Activated T-helper 1 cell treated with anti-CD3 and anti-CD28 coated beads, Interleukin-12 subunit alpha, Interleukin-12 subunit beta, Interleukin-2, Interleukin-4 antibody, amounts not matched to agents 30 ng/mL and 10 ng/mL and 1 ng/mL, durations not matched to agents 14 hours and 24 hours and 36 hours (primary cell): ENCODE measurements at regions of chr2 and their contacts with region 1.

Region 1: GRCh38 chr2:197705121-197705911 is at the start of gene MARS2:
- DNase-seq: peak; percentile 91
- H3K4me3 Mint-ChIP-seq: peak within 1 kb of the TSS; percentile 94
- H3K27ac Mint-ChIP-seq: peak within 1 kb of the TSS; percentile 85
- H3K4me1 Mint-ChIP-seq: peaks cover 60% of the 10 kb centered on the region
- H3K27me3 Mint-ChIP-seq: peaks cover 3% of the 10 kb centered on the region
- total RNA-seq, gene MARS2: 22.6 and 22.9 TPM in 2 replicates

Region 2: GRCh38 chr2:196565106-196565765 is 1140.1 kb before region 1 on chr2:
- intact Hi-C with region 1: no loop called
- DNase-seq: no peak
- H3K4me3 Mint-ChIP-seq: no peak overlapping the region
- H3K27ac Mint-ChIP-seq: no peak overlapping the region
- H3K4me1 Mint-ChIP-seq: no peaks in the 10 kb centered on the region
- H3K27me3 Mint-ChIP-seq: peaks cover 15% of the 10 kb centered on the region

Region 3: GRCh38 chr2:196783431-196784094 is 921.8 kb before region 1 on chr2:
- intact Hi-C with region 1: loop called (anchors 10 kb)
- DNase-seq: no peak
- H3K4me3 Mint-ChIP-seq: peak overlapping the region; percentile 12
- H3K27ac Mint-ChIP-seq: peak overlapping the region; percentile 80
- H3K4me1 Mint-ChIP-seq: peaks cover 22% of the 10 kb centered on the region
- H3K27me3 Mint-ChIP-seq: no peaks in the 10 kb centered on the region

Region 4: GRCh38 chr2:196900843-196901242 is 804.5 kb before region 1 on chr2:
- intact Hi-C with region 1: no loop called
- DNase-seq: no peak
- H3K4me3 Mint-ChIP-seq: no peak overlapping the region
- H3K27ac Mint-ChIP-seq: no peak overlapping the region
- H3K4me1 Mint-ChIP-seq: peaks cover 28% of the 10 kb centered on the region
- H3K27me3 Mint-ChIP-seq: no peaks in the 10 kb centered on the region

Region 5: DNA sequence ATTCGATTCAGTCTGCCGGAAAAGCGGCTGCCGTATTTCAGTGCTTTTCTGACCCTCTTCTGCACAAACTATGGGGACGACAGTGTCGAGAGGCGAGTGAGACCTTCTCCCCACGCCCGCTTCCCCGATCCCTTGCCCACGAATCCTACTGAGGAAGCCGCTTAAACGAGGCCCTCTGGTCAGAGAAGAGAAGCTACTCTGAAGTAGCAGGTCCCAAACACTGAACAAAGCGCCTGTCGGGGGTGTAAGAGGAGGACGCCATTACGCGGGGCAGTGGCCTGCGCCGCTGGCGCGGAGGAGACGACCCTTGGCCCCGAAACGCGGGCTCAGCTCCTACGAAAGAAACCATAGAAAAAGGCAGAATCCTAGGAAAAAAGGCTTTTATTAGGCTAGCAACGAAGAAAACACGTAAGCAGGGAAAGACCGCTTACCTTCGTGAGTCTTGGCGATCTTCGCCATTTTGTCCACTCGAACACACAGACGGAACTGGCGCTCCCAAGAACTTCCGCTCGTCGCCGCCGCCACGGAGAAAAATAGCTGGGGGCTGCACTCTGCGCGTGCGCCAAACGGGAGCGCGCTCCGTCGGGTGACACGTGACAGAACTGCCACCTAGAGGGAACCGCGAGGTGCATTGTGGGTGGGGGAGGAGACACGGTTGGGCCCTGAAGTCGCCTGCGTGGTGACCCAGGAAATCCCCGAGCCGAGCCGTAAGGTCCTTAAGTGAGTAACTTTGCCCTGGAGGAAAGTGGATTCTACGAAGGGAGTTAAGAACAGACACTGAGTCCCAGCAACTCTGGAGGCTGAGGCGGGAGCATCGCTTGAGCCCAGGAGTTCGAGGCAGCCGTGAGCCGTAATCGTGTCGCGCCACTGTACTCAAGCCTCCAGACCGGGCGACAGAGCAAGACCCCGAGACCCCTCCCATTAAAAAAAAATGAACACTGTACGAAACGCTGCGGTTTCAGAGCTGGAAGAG is 270.5 kb before region 1 on chr2 and contains the start of gene SF3B1:
- intact Hi-C with region 1: loop called (anchors 1 kb)
- DNase-seq: peak; percentile 99
- H3K4me3 Mint-ChIP-seq: peak within 1 kb of the TSS; percentile 95
- H3K27ac Mint-ChIP-seq: peak within 1 kb of the TSS; percentile 99
- H3K4me1 Mint-ChIP-seq: peaks cover 50% of the 10 kb centered on the region
- H3K27me3 Mint-ChIP-seq: no peaks in the 10 kb centered on the region
- total RNA-seq, gene SF3B1: 247 and 268 TPM in 2 replicates

Region 6: DNA sequence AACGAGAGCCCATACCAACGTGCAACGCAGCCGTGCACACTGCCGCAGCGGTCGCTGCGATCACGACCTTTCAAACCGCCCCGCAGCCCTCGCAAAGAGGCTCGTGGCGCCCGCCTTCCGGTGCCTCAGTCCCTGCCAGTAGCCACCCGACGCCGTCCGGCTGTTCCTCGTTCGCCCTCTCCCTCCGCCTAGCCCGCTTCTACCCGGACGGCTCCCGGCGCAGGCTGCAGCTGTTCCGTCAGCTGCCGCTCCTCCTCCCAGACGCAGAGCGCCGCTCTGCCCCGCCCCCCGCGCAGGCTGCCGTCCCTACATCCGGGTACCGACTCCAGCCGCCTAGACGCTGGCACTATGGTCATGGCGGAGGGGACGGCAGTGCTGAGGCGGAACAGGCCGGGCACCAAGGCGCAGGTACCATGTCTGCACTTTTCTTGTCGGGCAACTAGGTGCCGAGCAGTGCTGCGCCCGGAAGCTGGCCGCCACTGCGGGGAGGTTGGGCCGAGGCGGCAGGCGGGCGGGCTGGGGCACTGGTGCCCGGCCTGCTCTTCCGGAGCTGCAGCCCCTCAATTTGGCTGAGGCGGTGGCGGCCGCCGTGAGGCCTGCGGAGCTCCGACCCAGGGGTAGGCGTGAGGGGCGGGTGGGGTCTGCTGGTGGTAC is 189.4 kb before region 1 on chr2 and contains the start of gene MOB4:
- intact Hi-C with region 1: loop called (anchors 1 kb)
- DNase-seq: peak; percentile 95
- H3K4me3 Mint-ChIP-seq: peak within 1 kb of the TSS; percentile 98
- H3K27ac Mint-ChIP-seq: peak within 1 kb of the TSS; percentile 90
- H3K4me1 Mint-ChIP-seq: peaks cover 32% of the 10 kb centered on the region
- H3K27me3 Mint-ChIP-seq: no peaks in the 10 kb centered on the region
- total RNA-seq, gene MOB4: 25.1 and 27.2 TPM in 2 replicates

Region 7: DNA sequence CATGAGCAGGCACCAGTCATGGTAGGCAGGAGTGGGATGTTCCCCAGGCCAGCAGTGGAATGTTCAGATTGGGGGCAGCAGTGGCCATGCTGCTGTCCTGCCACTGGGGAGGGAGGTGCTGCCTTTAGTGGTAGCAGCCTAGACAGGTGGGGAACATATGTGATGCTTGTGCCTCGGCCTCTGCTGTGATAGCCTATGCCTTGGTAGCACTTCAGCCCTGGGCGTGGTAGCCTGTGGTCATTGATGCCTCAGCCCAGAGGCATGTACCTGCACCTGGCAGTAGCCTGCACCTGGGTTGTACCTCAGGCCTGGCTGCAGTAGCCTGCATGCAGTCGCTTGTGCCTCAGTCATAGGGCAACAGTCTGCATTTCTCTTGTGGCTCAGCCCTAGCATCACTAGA is 37.0 kb before region 1 on chr2:
- intact Hi-C with region 1: no loop called
- DNase-seq: no peak
- H3K4me3 Mint-ChIP-seq: no peak overlapping the region
- H3K27ac Mint-ChIP-seq: no peak overlapping the region
- H3K4me1 Mint-ChIP-seq: no peaks in the 10 kb centered on the region
- H3K27me3 Mint-ChIP-seq: no peaks in the 10 kb centered on the region

Region 8: GRCh38 chr2:198004921-198005829 is 299.9 kb after region 1 on chr2:
- intact Hi-C with region 1: loop called (anchors 5 kb)
- DNase-seq: peak; percentile 30
- H3K4me3 Mint-ChIP-seq: peak overlapping the region; percentile 46
- H3K27ac Mint-ChIP-seq: peak overlapping the region; percentile 76
- H3K4me1 Mint-ChIP-seq: peaks cover 50% of the 10 kb centered on the region
- H3K27me3 Mint-ChIP-seq: no peaks in the 10 kb centered on the region